ENCODE measurements at regions of chr3 and their contacts with region 1.

Region 1: DNA sequence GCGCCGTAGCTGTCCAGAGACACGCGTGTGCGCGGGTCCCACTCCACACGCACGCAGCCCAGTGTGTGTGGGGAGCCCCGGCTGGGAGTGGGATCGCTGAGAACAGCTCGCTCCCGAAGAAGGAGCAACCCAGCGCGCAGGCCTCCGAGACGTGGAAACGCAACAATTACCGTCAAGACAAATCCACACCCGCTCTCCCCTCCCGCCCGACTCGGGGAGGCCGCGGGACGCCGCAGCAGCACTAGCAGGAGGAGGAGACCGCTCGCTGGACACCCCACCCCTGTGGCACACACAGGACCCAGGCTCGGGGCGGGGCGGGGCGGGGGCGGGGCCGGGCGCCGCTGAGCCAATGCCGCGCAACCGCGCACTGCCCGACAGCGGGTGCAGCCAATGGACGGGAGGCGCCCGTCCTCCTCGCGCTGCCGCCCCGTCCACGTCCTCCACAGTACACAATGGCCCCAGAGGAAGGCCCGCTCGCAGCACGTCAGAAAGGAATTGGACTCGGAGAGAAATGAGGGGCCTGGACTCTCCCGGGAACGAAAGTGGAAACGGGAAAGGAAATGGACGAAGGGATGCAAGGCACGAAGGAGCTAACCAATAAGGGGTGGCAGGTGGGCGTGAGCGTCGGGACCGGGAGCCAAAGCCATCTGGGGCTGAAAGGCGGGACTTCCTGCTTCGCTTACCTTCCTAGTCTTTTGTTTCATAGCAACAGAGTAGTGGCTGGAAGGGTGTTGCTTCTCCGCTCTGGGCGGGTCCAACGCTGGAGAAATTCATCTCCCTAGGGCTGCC is at the start of gene CBLB:
- DNase-seq: peak; percentile 97
- ATAC-seq: peak; percentile 83
- H3K4me3 ChIP-seq: peak within 1 kb of the TSS; percentile 96
- H3K27ac ChIP-seq: peak within 1 kb of the TSS; percentile 61
- H3K4me1 ChIP-seq: peaks cover 43% of the 10 kb centered on the region
- H3K27me3 ChIP-seq: no peaks in the 10 kb centered on the region
- CTCF ChIP-seq: no peak
- total RNA-seq, gene CBLB: 20.0 and 23.9 TPM in 2 replicates

Region 2: GRCh38 chr3:105771392-105771791 is 97.5 kb before region 1 on chr3:
- CTCF ChIA-PET with region 1: no interaction called
- POLR2A ChIA-PET with region 1: interaction called, 11 read pairs
- intact Hi-C with region 1: no loop called
- DNase-seq: no peak
- ATAC-seq: no peak
- H3K4me3 ChIP-seq: no peak overlapping the region
- H3K27ac ChIP-seq: no peak overlapping the region
- H3K4me1 ChIP-seq: no peaks in the 10 kb centered on the region
- H3K27me3 ChIP-seq: no peaks in the 10 kb centered on the region
- CTCF ChIP-seq: no peak

Region 3: GRCh38 chr3:105836533-105836932 is 32.4 kb before region 1 on chr3:
- CTCF ChIA-PET with region 1: no interaction called
- POLR2A ChIA-PET with region 1: no interaction called
- intact Hi-C with region 1: no loop called
- DNase-seq: peak; percentile 89
- ATAC-seq: peak; percentile 87
- H3K4me3 ChIP-seq: no peak overlapping the region; the same call in 1 of the 2 replicates
- H3K27ac ChIP-seq: peak overlapping the region; percentile 65
- H3K4me1 ChIP-seq: peaks cover 30% of the 10 kb centered on the region
- H3K27me3 ChIP-seq: no peaks in the 10 kb centered on the region
- CTCF ChIP-seq: 0 out of 2 replicates have a peak, but pooled peaks have one; percentile 17

Region 4: GRCh38 chr3:105950881-105951600 is 82.1 kb after region 1 on chr3:
- CTCF ChIA-PET with region 1: no interaction called
- POLR2A ChIA-PET with region 1: no interaction called
- intact Hi-C with region 1: loop called (anchors 5 kb)
- DNase-seq: no peak
- ATAC-seq: no peak
- H3K4me3 ChIP-seq: no peak overlapping the region
- H3K27ac ChIP-seq: no peak overlapping the region
- H3K4me1 ChIP-seq: peaks cover 23% of the 10 kb centered on the region
- H3K27me3 ChIP-seq: no peaks in the 10 kb centered on the region
- CTCF ChIP-seq: no peak

Region 5: DNA sequence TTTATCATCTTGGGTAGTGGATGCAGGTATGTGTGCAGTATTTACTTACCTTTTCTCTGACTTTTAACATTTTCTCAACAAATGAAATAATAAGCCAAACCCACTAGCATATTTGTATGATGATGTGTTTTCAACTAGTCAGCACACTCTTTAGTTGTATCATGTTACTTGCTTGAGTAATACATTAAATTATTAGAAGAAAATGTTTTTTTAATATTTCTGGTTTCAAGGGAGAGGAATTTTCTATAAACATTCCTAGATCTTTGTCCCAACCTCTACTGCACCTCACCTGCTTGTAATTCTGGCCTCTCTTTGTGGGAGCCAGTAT is 161.6 kb after region 1 on chr3:
- CTCF ChIA-PET with region 1: no interaction called
- POLR2A ChIA-PET with region 1: no interaction called
- intact Hi-C with region 1: loop called (anchors 2 kb)
- DNase-seq: peak; percentile 87
- ATAC-seq: peak; percentile 82
- H3K4me3 ChIP-seq: peak overlapping the region; percentile 30; the same call in 1 of the 2 replicates
- H3K27ac ChIP-seq: peak overlapping the region; percentile 82
- H3K4me1 ChIP-seq: peaks cover 54% of the 10 kb centered on the region
- H3K27me3 ChIP-seq: no peaks in the 10 kb centered on the region
- CTCF ChIP-seq: no peak

Region 6: DNA sequence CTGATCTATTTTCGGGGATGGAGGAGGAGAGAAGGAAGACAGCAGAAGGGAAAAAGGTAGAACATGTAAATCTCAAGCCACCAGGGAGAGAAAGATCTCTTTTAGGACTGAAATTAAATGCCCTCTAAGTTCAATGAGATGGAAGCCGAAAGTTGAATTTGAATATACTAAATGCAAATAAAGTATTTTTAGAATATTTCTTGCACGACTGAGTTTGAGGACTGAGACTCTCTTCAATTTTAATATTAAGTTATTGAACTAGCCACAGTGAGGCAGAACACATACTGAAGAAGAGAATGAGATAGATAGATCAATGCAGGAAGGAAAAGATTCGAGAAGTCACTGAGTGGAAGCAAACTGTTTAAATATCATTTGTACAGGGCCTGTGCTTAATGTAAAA is 399.8 kb after region 1 on chr3:
- CTCF ChIA-PET with region 1: no interaction called
- POLR2A ChIA-PET with region 1: no interaction called
- intact Hi-C with region 1: no loop called
- DNase-seq: no peak
- ATAC-seq: no peak
- H3K4me3 ChIP-seq: no peak overlapping the region
- H3K27ac ChIP-seq: no peak overlapping the region
- H3K4me1 ChIP-seq: no peaks in the 10 kb centered on the region
- H3K27me3 ChIP-seq: no peaks in the 10 kb centered on the region
- CTCF ChIP-seq: no peak

Region 7: GRCh38 chr3:106457286-106458180 is 588.6 kb after region 1 on chr3:
- CTCF ChIA-PET with region 1: no interaction called
- POLR2A ChIA-PET with region 1: no interaction called
- intact Hi-C with region 1: loop called (anchors 5 kb)
- DNase-seq: peak; percentile 96
- ATAC-seq: peak; percentile 100
- H3K4me3 ChIP-seq: no peak overlapping the region
- H3K27ac ChIP-seq: no peak overlapping the region
- H3K4me1 ChIP-seq: peaks cover 8% of the 10 kb centered on the region; the same call in 1 of the 2 replicates
- H3K27me3 ChIP-seq: no peaks in the 10 kb centered on the region
- CTCF ChIP-seq: no peak

Measured in PC-3 (cell line).